Body of pancreas (tissue), 4 donors: ENCODE measurements at regions of chr1 and their contacts with region 1.

Region 1: DNA sequence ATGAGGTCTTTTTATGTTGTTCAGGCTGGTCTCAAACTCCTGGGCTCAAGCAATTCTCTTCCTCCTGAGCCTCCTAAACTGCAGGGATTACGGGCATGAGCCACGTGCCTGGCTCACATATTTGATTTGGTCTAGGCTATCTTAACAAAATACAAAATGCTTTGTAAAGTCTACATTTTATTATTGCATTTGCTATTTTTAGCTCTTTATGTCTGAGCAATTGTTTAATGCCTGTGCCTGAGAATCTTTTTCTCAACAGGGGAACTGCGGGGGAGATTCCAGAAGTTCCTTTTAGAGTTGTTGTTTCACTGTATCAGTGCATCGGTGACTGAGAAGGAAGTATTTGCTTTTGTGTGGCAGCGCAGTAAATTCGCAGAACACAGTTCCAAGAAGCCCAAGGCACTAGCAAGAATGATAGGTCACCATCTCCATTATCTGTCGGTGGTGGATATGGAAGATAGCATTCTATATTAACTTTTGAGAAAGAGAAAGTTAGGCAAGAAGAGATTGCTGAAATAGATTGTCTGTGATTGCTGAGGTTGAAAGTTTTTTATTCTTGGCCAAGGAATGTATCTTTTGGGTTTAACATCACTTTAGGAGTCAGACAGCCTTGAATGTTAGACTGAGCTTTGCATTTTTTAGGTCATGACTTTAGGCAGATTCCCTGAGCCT is 167.3 kb downstream of the PDE4B start:
- DNase-seq: no peak
- ATAC-seq: no peak
- H3K4me3 ChIP-seq: no peak overlapping the region
- H3K27ac ChIP-seq: no peak overlapping the region
- H3K4me1 ChIP-seq: no peaks in the 10 kb centered on the region
- H3K27me3 ChIP-seq: no peaks in the 10 kb centered on the region
- CTCF ChIP-seq: no peak
- POLR2A ChIP-seq: no peak

Region 2: DNA sequence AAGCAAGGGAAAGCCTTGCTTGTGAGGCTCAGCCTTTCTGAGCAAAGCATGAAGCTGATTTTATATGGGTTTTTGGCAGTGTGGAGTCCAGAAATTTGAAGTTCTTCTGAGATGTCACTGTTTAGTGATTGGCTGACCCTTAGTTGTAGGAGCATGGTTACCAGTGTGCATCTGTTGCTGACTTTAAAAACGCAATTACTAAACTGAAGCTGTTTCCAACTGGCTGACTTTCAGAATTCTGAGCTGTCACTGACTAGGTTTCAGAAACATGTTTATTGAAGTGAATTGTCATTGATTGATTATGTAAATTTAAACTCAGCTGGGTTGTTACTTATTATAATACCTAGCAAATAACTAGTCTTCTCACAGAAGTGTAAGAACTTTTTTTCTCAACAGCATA is 78.0 kb before region 1 on chr1:
- intact Hi-C with region 1: no loop called
- DNase-seq: no peak
- ATAC-seq: no peak
- H3K4me3 ChIP-seq: no peak overlapping the region
- H3K27ac ChIP-seq: no peak overlapping the region
- H3K4me1 ChIP-seq: no peaks in the 10 kb centered on the region
- H3K27me3 ChIP-seq: no peaks in the 10 kb centered on the region
- CTCF ChIP-seq: no peak
- POLR2A ChIP-seq: no peak

Region 3: DNA sequence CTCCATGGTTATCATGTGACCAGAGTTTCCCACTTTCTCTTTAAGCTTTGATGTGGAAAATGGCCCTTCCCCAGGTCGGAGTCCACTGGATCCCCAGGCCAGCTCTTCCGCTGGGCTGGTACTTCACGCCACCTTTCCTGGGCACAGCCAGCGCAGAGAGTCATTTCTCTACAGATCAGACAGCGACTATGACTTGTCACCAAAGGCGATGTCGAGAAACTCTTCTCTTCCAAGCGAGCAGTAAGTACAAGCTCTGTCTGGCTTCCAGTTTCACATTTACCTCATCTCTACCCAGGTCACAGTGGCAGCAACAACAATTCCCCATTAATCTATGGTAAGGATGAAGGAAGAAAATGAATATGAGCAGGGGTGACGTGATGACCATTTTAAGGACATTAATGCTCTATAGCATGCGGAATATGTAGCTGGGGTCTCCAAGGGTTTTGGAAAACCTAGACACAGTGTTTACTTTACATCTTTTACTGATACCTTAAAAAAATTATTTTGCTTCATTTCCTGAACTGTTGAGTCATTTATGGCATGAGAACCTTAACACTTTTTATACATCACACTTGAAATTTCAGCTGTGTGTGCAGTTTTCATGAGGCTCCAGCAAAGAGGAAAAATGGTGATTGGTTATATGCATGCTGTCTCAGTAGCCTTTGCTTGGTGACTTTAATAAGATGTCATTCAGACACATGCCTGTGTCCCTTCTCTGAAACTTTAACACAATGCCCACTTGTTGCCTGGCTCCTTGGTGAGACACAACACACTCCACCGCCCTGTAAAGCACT is 287.6 kb after region 1 on chr1:
- intact Hi-C with region 1: loop called (anchors 5 kb)
- DNase-seq: no peak
- ATAC-seq: no peak
- H3K4me3 ChIP-seq: no peak overlapping the region
- H3K27ac ChIP-seq: no peak overlapping the region
- H3K4me1 ChIP-seq: no peaks in the 10 kb centered on the region
- H3K27me3 ChIP-seq: no peaks in the 10 kb centered on the region
- CTCF ChIP-seq: no peak
- POLR2A ChIP-seq: no peak